ENCODE measurements at regions of chr7 and their contacts with region 1.

Region 1: GRCh38 chr7:39465055-39465929 is 100.9 kb upstream of the YAE1 start:
- DNase-seq: peak; percentile 17
- ATAC-seq: peak; percentile 96
- H3K4me3 ChIP-seq: no peak overlapping the region
- H3K27ac ChIP-seq: no peak overlapping the region
- H3K4me1 ChIP-seq: no peaks in the 10 kb centered on the region
- H3K27me3 ChIP-seq: no peaks in the 10 kb centered on the region
- CTCF ChIP-seq: peak; percentile 75 to 93 (median 86); a peak in 5 of 6 replicates
- EP300 ChIP-seq: no peak
- POLR2A ChIP-seq: no peak
- RAD21 ChIP-seq: peak; percentile 80

Region 2: DNA sequence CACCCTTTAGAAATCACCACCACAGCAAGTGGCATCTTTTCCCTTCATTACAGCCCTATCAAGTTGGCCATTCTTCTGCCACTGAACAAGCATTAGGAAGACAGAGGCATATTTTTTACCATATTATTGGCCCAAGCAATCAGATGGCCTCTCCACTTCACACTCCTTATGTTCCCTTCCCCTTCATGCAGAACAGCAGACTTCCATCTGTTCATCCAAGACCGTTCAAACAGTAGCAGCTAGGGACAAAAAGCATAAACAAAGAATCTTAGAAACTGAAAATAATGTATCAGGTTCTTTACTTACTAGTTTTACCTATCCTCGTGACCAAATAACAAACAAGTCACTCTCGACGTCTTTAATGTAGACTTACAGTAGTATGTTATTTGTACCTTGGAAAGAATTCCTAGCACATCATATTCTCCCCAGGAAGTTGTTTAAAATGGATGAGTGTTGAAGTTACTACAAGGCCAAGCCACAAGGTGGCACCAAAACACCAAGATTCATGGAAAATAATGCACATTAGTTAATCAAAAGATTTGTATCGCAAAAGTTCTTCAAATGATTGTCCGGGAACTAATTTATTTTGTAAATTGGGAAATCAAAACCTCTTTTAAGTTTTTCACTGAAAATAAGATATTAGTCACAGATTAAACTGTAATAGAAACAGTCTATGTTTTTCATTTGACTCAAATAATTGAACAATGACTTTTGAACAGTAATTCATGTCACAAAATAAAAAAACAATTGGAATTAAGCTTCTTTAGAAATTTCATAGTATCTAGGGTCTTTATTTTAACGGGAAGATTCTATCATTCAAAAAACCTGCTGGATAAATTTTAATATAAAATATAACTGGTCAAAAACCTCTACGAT is 668.4 kb before region 1 on chr7:
- CTCF ChIA-PET with region 1: interaction called, 8 read pairs
- POLR2A ChIA-PET with region 1: no interaction called
- RAD21 ChIA-PET with region 1: interaction called, 5 read pairs
- SMC1A ChIA-PET with region 1: interaction called, 8 read pairs
- in situ Hi-C with region 1: loop called (anchors 5 kb)
- intact Hi-C with region 1: loop called (anchors 1 kb)
- DNase-seq: peak; percentile 15
- ATAC-seq: 0 out of 3 replicates have a peak, but pooled peaks have one; percentile 39
- H3K4me3 ChIP-seq: no peak overlapping the region
- H3K27ac ChIP-seq: no peak overlapping the region
- H3K4me1 ChIP-seq: no peaks in the 10 kb centered on the region
- H3K27me3 ChIP-seq: no peaks in the 10 kb centered on the region
- CTCF ChIP-seq: peak; percentile 53 to 76 (median 61); a peak in 5 of 6 replicates
- EP300 ChIP-seq: no peak
- POLR2A ChIP-seq: no peak
- RAD21 ChIP-seq: peak; percentile 91

Region 3: DNA sequence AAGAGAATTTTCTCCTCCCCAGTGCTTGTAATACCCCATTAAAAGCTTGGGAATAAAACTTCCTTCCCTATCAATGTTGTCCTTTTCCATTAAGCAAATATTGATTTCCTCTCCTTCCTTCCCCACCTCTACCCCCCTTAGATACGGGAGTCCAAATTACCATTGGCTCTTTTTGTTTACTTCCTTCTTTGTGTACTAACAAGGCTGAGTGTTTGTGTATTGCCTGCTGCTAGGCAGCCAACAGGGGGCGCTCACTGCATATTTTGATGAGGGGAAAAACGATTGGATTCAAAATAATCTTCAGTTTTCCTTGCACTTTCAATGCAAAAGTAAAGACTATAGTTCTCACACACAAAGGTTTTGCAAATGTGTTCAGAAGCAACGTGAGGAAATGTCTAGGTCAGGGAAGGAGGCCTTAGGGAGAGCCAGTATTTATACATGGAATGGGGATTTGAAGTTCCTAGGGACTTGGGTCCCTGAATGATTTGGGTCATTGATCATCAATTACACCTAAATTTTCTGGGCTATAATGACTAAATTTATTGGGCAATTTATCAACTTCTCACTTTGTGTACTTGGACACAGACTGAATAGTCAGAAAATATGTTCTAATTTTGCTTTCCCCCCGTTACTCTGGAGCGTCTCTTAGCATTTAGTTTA is 532.7 kb before region 1 on chr7:
- CTCF ChIA-PET with region 1: interaction called, 43 read pairs
- POLR2A ChIA-PET with region 1: no interaction called
- RAD21 ChIA-PET with region 1: interaction called, 10 read pairs
- SMC1A ChIA-PET with region 1: interaction called, 11 read pairs
- in situ Hi-C with region 1: loop called (anchors 5 kb)
- intact Hi-C with region 1: loop called (anchors 1 kb)
- DNase-seq: peak; percentile 16
- ATAC-seq: peak; percentile 92
- H3K4me3 ChIP-seq: no peak overlapping the region
- H3K27ac ChIP-seq: no peak overlapping the region
- H3K4me1 ChIP-seq: no peaks in the 10 kb centered on the region
- H3K27me3 ChIP-seq: no peaks in the 10 kb centered on the region
- CTCF ChIP-seq: peak; percentile 81 to 96 (median 90)
- EP300 ChIP-seq: no peak
- POLR2A ChIP-seq: no peak
- RAD21 ChIP-seq: peak; percentile 80

Region 4: GRCh38 chr7:39073432-39073831 is 391.9 kb before region 1 on chr7:
- CTCF ChIA-PET with region 1: interaction called, 12 read pairs
- POLR2A ChIA-PET with region 1: no interaction called
- RAD21 ChIA-PET with region 1: interaction called, 5 read pairs
- SMC1A ChIA-PET with region 1: interaction called, 7 read pairs
- in situ Hi-C with region 1: no loop called
- intact Hi-C with region 1: loop called (anchors 1 kb)
- DNase-seq: no peak
- ATAC-seq: no peak
- H3K4me3 ChIP-seq: no peak overlapping the region
- H3K27ac ChIP-seq: no peak overlapping the region
- H3K4me1 ChIP-seq: no peaks in the 10 kb centered on the region
- H3K27me3 ChIP-seq: no peaks in the 10 kb centered on the region
- CTCF ChIP-seq: no peak
- EP300 ChIP-seq: no peak
- POLR2A ChIP-seq: no peak
- RAD21 ChIP-seq: no peak

Region 5: GRCh38 chr7:39304668-39305405 is 160.5 kb before region 1 on chr7:
- CTCF ChIA-PET with region 1: no interaction called
- POLR2A ChIA-PET with region 1: no interaction called
- RAD21 ChIA-PET with region 1: interaction called, 4 read pairs
- SMC1A ChIA-PET with region 1: no interaction called
- in situ Hi-C with region 1: no loop called
- intact Hi-C with region 1: loop called (anchors 5 kb)
- DNase-seq: no peak
- ATAC-seq: peak; percentile 89
- H3K4me3 ChIP-seq: no peak overlapping the region
- H3K27ac ChIP-seq: no peak overlapping the region
- H3K4me1 ChIP-seq: no peaks in the 10 kb centered on the region
- H3K27me3 ChIP-seq: no peaks in the 10 kb centered on the region; a peak in 1 of 4 replicates
- CTCF ChIP-seq: no peak
- EP300 ChIP-seq: 0 out of 4 replicates have a peak, but pooled peaks of 1 of the 2 experiments have one; percentile 16
- POLR2A ChIP-seq: no peak
- RAD21 ChIP-seq: no peak

Region 6: DNA sequence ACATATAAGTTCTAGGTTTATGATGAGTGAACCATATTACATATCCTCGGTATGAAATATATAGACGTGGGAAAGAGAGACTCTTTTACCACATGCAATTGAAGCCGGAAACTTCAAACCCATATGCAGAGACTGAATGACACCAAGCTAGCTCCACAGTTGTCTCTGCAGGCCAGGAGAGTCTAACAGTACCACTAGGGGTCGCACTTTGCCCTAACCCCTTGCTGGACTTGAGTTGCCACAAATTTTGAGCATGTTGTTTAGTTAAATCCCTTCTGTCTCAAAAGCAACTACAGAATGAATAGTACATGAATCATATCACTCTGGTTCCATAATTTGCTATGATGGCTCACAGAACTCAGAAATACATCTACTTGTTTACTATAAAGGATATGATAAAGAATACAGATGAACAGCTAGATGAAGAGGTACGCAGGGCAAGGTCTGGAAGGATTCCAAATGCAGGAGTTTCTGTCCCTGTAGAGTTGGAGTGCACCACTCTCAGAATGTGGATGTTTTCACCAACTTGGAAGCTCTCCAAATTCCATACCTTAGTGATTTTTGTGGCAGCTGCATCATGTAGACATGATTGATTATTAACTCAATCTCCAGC is 11.4 kb before region 1 on chr7:
- CTCF ChIA-PET with region 1: interaction called, 30 read pairs
- POLR2A ChIA-PET with region 1: no interaction called
- RAD21 ChIA-PET with region 1: interaction called, 4 read pairs
- SMC1A ChIA-PET with region 1: interaction called, 16 read pairs
- in situ Hi-C with region 1: no loop called
- intact Hi-C with region 1: no loop called
- DNase-seq: peak; percentile 23
- ATAC-seq: peak; percentile 95
- H3K4me3 ChIP-seq: no peak overlapping the region
- H3K27ac ChIP-seq: no peak overlapping the region
- H3K4me1 ChIP-seq: no peaks in the 10 kb centered on the region
- H3K27me3 ChIP-seq: peaks cover 0 to 6% of the 10 kb centered on the region in 2 experiments; a peak in 1 of 4 replicates
- CTCF ChIP-seq: peak; percentile 68 to 96 (median 93)
- EP300 ChIP-seq: no peak
- POLR2A ChIP-seq: no peak
- RAD21 ChIP-seq: peak; percentile 57

Region 7: DNA sequence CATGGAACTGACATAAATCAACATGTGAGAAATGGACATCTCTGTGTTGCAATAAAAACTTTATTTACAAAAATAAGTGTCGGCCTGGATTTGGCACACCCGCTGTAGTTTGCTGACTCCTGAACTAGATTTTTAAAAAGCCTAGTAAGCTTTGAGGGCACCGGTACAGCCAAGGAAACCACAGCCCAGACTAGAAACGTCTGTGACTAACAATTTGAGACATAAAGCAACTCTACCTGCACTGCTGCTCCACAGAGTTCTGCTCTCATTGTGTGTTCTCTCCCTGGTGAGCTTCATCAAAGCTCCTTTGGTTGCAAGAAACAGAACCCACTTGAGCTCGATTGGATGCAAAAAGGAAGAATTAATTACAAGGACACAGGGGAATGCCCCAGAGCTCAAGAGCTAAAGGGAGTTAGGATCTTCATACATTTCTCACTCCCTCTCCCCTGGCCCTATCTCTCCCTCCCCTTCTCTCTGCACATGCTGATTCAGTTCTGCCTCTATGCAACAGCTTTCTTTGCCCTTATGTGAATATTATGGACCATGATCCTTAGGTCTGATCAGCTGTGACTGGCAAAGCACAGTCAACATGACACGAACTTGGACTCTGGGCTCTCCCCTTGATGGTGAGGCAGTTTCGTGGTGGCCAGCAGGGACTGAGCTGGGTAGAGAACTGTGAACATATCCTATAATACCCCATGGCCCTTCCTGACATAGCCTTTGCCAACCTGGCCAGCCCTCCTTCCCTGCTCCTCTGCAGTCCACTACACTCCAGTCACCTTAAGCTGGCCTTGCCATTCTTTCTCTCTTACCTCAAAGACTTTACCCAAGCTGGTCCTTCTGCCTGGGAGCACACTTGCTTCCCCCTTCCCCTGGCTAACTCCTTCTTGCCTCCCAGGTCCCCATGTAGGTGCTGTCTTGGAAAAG is 23.4 kb after region 1 on chr7:
- CTCF ChIA-PET with region 1: interaction called, 4 read pairs
- POLR2A ChIA-PET with region 1: no interaction called
- RAD21 ChIA-PET with region 1: no interaction called
- SMC1A ChIA-PET with region 1: interaction called, 11 read pairs
- in situ Hi-C with region 1: no loop called
- intact Hi-C with region 1: no loop called
- DNase-seq: no peak
- ATAC-seq: no peak
- H3K4me3 ChIP-seq: no peak overlapping the region
- H3K27ac ChIP-seq: no peak overlapping the region
- H3K4me1 ChIP-seq: no peaks in the 10 kb centered on the region
- H3K27me3 ChIP-seq: peaks cover 0 to 3% of the 10 kb centered on the region in 2 experiments; a peak in 1 of 4 replicates
- CTCF ChIP-seq: no peak
- EP300 ChIP-seq: no peak
- POLR2A ChIP-seq: no peak
- RAD21 ChIP-seq: no peak